ENCODE measurements at regions of chr5 and their contacts with region 1.

Region 1: DNA sequence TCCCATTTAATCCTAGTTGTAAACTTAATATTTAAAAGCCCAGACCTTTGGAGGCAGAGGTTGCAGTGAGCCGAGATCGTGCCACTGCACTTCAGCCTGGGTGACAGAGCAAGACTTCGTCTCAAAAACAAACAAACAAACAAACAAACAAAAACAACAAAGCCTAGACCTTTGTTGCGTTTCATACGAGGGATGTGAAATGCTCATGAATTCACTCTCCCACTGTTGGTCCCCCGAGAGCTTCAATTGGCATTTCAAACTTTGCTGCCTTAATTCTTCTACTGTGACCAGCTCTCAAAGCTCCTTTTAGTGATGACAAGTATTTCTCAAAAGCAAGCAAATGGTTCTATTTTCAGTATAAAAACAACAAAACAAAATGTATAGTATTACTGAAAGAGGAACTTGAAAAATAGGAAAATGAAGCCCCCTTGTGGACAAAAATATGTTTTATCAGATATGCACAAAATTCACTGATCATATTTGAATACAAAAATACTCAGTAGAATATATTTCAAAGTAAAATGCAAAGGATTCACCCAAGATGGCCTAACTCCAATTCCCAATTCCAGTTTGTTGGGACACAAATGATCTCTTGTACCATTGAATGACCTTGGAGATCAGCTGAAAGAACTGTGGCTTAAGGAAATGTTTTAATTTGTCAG is 140.4 kb downstream of the ESM1 start:
- DNase-seq: no peak
- H3K4me3 ChIP-seq: no peak overlapping the region
- CTCF ChIP-seq: no peak

Region 2: DNA sequence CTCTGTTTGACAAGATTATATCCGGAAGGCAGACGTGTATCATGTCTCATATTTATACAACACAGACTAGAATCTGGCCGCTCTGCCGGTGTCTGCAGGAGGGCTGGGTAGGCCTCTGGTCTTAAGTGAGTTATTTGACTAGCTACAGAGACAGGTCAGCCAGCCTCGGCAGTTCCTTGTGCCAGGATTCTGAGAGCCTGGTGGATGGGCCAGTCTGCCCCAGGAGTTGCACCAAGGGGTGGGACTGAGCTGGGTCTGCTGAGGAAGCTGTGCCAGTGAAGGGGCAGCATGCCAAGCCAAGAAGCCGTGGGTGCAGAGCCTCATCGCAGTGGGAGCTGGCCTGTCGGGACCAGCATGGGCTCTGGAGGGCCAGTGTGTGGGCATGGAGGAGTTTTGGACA is 320.3 kb before region 1 on chr5:
- CTCF ChIA-PET with region 1: interaction called, 148 read pairs
- POLR2A ChIA-PET with region 1: no interaction called
- DNase-seq: no peak
- H3K4me3 ChIP-seq: no peak overlapping the region
- CTCF ChIP-seq: no peak

Region 3: GRCh38 chr5:54743997-54744788 is 100.8 kb before region 1 on chr5:
- CTCF ChIA-PET with region 1: interaction called, 11 read pairs
- POLR2A ChIA-PET with region 1: no interaction called
- DNase-seq: peak; percentile 92
- H3K4me3 ChIP-seq: no peak overlapping the region
- CTCF ChIP-seq: no peak

Region 4: GRCh38 chr5:54820346-54821134 is 24.5 kb before region 1 on chr5:
- CTCF ChIA-PET with region 1: interaction called, 10 read pairs
- POLR2A ChIA-PET with region 1: no interaction called
- DNase-seq: no peak
- H3K4me3 ChIP-seq: no peak overlapping the region
- CTCF ChIP-seq: no peak

Region 5: GRCh38 chr5:54905943-54906537 is 61.0 kb after region 1 on chr5:
- CTCF ChIA-PET with region 1: interaction called, 11 read pairs
- POLR2A ChIA-PET with region 1: no interaction called
- DNase-seq: no peak
- H3K4me3 ChIP-seq: no peak overlapping the region
- CTCF ChIP-seq: peak; percentile 54